Pancreas (tissue), 10 donors: ENCODE measurements at regions of chr5 and their contacts with region 1.

Region 1: DNA sequence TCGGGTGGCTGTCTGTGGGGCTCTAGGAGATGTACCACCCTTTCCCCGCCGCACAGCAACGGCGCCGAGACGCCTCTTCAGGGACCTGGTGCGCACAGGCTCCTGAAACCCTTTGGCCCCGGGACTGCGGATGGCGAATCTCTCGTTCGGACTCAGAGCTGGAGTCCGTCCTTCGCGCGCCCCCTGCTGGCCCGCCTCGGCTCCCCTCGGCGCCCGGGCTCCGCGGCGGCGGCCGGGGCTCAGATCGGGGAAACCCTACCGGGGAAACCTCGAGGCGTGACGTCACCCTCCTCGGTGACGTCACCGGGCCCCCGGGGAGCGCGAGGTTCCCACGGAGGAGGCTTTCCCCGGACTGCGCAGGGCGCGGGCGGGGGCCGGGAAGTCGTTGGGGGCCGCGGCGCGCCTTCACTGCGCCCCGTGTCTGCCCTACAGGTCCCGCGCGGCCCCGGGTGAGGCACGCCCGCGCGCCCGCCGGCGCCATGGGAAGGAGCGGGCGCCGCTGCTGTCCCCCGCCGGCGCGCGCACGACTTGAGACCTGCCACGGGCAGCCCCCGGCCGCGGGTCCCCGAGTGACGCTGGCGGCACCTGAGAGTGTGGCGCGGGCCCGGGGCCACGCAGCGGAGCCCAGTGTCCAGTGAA is 7.9 kb downstream of the PRR7 start:
- DNase-seq: peak; percentile 88 to 100 (median 96)
- ATAC-seq: peak; percentile 63 to 81 (median 74)
- H3K4me3 ChIP-seq: peak overlapping the region; percentile 38 to 69 (median 63)
- H3K27ac ChIP-seq: peak overlapping the region; percentile 70 to 88 (median 82)
- H3K4me1 ChIP-seq: peaks cover 4 to 12% (median 5%) of the 10 kb centered on the region in 3 donors
- H3K27me3 ChIP-seq: no peaks in the 10 kb centered on the region
- CTCF ChIP-seq: peak; percentile 90 to 96 (median 94)

Region 2: DNA sequence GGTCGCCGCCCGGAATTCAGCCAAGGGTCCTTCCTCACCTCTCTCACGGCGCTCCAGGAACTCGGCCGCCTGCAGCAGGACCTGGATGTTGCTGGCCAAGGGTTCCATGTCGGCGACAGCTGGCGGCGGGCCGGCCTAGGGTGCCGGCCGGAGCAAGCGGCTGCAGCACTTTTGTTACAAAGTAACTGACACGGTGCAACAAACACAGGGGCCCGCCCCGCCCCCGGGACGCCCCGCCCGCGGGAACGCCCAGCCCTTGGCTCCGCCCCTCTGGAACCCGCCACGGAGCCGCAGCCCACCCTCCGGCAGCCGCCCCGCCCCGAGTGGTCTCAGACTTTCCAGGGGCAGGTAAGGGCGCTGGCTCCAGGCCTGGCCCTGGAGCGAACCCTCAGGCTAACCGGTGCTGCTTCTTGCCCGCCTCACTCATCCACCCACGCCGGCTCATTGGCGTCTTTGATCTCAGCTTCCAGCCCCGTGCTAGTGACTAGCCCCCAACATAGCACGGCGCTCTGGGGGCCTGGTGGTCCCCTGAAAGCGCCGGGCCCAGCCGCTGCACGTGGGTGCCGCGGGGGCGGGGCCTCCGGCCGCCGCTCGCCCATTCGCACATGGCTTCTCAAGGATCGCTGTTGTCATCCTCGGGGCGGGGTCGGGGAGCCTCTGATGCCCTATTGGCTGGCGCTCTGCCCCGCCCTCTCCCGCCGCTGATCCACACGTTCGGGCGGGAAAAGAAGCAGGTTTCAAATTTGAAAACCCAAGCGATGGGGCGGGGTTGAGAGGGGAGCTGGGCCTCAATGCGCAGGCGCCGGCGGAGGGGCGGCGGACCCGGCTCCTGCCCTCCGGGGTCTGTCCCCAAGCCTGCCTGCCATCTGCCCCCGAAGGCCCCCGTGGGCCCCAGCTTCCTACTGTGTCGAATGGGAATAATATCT is 142.5 kb before region 1 on chr5 and contains the start of gene MXD3:
- intact Hi-C with region 1: loop called in 1 of 3 experiments (anchors 10 kb)
- DNase-seq: peak; percentile 92 to 95 (median 94)
- ATAC-seq: peak; percentile 61 to 93 (median 85)
- H3K4me3 ChIP-seq: peak within 1 kb of the TSS; percentile 20 to 50 (median 32)
- H3K27ac ChIP-seq: no peak within 1 kb of the TSS
- H3K4me1 ChIP-seq: peaks cover 11 to 32% (median 12%) of the 10 kb centered on the region in 3 donors
- H3K27me3 ChIP-seq: no peaks in the 10 kb centered on the region
- CTCF ChIP-seq: no peak
- total RNA-seq, gene MXD3: 3.0 to 7.1 (median 5.4) TPM

Region 3: DNA sequence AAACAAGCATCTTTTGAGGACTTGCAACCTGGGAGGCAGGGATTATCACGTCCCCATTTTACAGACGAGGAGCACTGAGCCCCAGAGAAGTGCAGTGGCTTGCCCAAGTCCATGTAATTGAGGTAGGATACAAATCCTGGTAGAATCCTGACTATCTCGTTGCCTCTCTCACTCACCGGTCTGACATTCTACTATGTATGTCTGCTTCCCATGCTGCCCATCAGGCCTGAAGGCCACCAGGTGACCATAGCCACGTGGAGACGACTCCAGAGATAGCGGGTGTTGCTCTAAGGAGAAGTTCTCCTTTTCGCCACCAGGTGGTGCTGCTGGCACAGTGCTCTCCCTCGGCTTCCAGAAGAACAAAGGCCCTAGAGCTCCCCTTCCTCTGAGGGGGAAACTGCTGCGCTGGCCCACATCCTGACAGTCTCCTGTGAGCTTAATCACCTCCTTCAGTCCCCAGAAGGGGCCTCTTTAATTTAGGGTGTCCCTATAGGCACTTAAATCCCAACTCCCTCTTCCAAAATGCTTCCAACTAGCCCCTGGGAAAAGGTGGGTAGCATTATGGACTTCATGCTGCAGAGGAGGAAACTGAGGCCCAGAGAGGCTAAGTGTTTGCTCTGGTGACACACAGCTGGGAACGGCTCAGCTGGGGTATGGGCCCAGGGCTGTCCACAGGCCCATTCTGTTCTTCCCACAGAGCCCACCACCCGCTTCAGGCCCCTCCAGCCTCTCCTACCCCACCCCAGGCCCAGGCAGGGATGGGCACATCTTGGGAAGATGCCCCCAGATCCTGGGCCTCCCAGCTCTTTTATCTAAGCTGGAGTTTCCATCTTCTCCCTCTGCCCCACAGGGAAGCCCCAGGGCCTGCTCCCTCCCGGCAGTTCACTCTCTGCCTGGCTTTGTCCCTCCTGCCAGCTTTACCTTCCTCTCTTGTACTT is 63.9 kb before region 1 on chr5:
- intact Hi-C with region 1: loop called in 1 of 3 experiments (anchors 5 kb)
- DNase-seq: peak; percentile 77 to 92 (median 86)
- ATAC-seq: peak; percentile 90 to 97 (median 95)
- H3K4me3 ChIP-seq: no peak overlapping the region
- H3K27ac ChIP-seq: no peak overlapping the region
- H3K4me1 ChIP-seq: no peaks in the 10 kb centered on the region
- H3K27me3 ChIP-seq: no peaks in the 10 kb centered on the region
- CTCF ChIP-seq: peak; percentile 95 to 99 (median 98)

Region 4: GRCh38 chr5:177405805-177406204 is 48.7 kb before region 1 on chr5:
- intact Hi-C with region 1: loop called in 1 of 3 experiments (anchors 5 kb)
- DNase-seq: no peak
- ATAC-seq: no peak
- H3K4me3 ChIP-seq: no peak overlapping the region
- H3K27ac ChIP-seq: no peak overlapping the region
- H3K4me1 ChIP-seq: peaks cover 4 to 14% (median 8%) of the 10 kb centered on the region in 3 donors
- H3K27me3 ChIP-seq: no peaks in the 10 kb centered on the region
- CTCF ChIP-seq: no peak